Vagina (tissue), 2 donors: ENCODE measurements at regions of chr22 and their contacts with region 1.

Region 1: DNA sequence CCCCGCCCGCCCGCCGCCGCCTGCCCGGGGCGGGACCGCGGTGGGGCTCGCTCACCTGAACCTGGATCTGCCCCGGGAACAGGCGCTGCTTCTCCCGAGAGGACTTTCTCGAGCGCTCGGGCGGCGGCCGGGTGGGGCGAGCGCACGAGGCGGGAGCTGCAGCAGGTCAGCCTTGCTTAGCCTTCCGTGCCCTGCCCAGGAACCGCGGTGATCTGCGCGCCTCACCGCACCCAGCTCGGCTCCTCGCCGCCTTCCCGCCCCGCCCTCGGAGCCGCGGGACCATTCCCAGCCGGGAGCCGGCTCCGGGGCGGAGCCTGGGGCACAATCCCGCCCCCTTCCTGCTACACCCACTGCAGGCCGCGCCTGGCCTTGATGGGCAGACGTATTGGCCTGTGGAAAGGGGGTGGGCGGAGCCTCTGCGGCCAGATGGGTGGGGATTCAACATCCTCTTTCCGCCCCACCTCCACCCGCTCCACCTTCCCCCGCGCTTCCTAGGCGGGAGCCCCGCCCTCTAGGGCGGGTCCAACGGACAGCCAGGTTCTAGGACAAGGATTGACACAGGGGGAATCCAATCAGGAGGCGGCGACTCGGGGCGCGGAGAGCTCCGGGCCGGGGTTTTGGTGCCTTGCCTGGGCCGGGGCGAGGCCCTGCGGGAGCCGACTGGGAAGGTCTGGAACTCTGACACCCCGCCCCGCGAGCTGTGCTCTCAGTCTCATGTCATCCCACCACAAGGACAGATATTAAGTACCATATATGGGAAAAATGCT is at the start of gene MYH9:
- DNase-seq: peak in 1 of 2 donors; percentile 99
- H3K4me3 ChIP-seq: peak within 1 kb of the TSS; percentile 98 to 100
- H3K27ac ChIP-seq: peak within 1 kb of the TSS; percentile 99
- H3K4me1 ChIP-seq: peaks cover 39% of the 10 kb centered on the region
- H3K27me3 ChIP-seq: no peaks in the 10 kb centered on the region
- CTCF ChIP-seq: no peak
- POLR2A ChIP-seq: peak; percentile 60 to 99
- total RNA-seq, gene MYH9: 333 TPM

Region 2: DNA sequence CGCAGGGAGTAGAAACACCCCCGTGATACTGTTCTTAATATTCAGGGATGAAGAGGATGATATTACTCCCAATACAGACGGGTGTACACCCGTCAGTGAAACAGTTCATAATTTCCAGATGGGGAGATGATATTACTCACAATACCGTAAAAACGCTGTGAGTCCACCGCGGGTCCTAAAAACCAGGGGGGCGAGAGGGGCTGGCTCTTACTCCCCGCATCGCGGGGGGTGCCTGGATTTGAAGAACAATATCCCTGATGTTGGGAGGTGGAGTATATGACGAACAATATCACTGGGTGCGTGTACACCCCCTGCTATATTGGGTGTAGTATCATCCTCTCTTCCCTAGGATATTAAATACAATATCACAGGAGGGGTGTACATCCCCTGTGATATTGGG is 690.8 kb before region 1 on chr22:
- intact Hi-C with region 1: no loop called
- DNase-seq: no peak
- H3K4me3 ChIP-seq: no peak overlapping the region
- H3K27ac ChIP-seq: no peak overlapping the region
- H3K4me1 ChIP-seq: no peaks in the 10 kb centered on the region
- H3K27me3 ChIP-seq: no peaks in the 10 kb centered on the region
- CTCF ChIP-seq: no peak
- POLR2A ChIP-seq: no peak

Region 3: DNA sequence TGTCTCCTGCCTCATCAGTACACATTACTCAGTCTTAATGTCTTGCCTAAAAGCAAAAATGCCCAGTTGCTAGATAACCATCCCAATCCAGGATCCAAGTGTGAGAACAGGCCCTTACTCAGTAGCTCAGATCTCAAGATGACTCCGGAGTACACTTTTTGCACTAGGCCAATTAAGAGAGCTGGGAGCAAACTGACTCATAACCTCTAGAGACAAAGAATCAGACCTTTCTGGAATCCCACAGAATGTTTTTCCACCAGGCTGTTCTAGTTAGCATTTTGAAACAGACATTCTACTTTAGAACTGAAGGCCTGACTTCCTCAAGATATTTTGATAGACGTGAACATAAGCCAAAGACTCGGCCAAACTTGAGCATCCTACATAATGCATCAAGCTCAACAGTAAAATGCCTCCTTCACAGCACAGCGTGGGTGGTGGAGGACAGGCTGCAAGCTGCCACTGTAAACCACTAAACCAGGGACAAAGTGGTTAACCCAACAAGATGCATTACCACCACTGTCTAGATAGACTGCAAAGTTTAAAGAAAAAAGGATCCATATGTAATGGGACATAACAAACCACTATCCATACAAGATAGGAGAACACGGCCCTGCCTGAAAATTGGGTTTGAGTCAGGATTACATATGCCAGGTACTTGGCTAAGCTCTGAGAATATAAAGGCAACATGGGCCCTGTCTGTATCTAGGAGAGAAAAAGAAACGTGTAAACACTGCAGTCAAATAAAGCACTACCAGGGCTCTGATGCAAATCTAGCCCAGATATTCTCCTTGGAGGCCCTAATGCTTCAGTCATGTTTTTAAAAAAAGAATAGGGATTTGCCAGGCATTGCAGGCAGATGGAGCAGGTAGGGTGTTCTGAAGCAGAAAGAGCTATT is 48.5 kb before region 1 on chr22:
- intact Hi-C with region 1: loop called (anchors 5 kb)
- DNase-seq: no peak
- H3K4me3 ChIP-seq: no peak overlapping the region
- H3K27ac ChIP-seq: peak overlapping the region; percentile 97
- H3K4me1 ChIP-seq: peaks cover 84% of the 10 kb centered on the region
- H3K27me3 ChIP-seq: no peaks in the 10 kb centered on the region
- CTCF ChIP-seq: no peak
- POLR2A ChIP-seq: no peak

Region 4: DNA sequence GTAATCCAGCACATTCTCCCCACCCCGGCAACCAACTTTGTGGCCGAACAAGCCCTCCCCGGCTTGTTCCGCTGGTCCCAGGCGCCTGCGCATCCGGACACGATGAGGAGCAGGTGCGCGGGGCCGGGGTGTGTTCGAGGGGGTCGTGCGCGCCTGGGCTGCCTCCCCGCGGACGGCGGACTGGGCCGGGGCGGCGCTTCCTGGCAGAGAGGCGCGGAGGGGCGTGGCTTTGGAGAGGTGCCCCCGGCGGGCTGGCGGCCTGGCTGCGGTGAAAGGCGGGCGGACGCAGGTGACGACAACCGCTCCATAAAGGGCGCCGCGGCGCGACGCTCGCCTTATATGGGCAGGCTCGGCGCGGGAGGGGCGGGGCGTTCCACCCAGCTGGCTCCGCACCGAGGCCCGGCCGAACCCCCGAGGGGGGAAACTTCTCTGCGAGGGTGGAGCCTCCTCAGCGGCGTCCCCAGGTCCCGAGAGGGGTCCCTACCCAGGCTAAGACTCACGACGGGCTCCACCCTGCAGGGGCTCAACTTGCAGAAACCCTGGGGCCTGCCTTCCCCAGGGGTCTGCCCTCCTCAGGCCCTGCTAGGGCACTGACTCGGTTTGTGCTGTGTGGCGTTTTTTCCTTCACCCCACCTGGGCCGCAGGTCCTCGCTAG is 67.1 kb after region 1 on chr22:
- intact Hi-C with region 1: loop called (anchors 5 kb)
- DNase-seq: no peak
- H3K4me3 ChIP-seq: peak overlapping the region; percentile 51 to 63
- H3K27ac ChIP-seq: peak overlapping the region; percentile 96
- H3K4me1 ChIP-seq: peaks cover 60% of the 10 kb centered on the region
- H3K27me3 ChIP-seq: no peaks in the 10 kb centered on the region
- CTCF ChIP-seq: no peak
- POLR2A ChIP-seq: peak; percentile 49 to 68